ENCODE measurements at regions of chr2 and their contacts with region 1.

Region 1: DNA sequence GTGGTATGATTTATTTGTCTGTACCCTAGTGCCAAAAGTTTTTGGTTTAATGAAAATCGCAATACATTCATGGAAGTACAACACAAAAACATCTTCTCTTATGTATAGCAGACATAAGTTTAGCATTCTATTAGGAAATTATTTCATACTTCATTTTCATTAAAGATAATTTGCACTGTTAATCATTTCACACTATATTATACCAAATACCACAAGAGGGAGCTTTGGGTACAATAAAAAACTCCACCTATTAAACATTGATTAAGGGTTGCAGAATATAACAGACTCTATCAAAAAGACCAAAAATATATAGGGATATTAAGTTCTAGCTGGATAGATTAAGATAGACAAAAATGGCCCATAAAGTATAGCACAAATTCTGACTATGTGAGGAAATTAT is 79.0 kb downstream of the SLC66A3 start:
- DNase-seq: no peak
- ATAC-seq: peak; percentile 47; the same call in 2 of the 3 replicates
- H3K4me3 ChIP-seq: no peak overlapping the region
- H3K27ac ChIP-seq: no peak overlapping the region
- H3K4me1 ChIP-seq: no peaks in the 10 kb centered on the region
- H3K27me3 ChIP-seq: no peaks in the 10 kb centered on the region
- CTCF ChIP-seq: peak in 1 of 3 experiments; percentile 26; a peak in 2 of 6 replicates
- EP300 ChIP-seq: no peak
- POLR2A ChIP-seq: no peak
- RAD21 ChIP-seq: peak; percentile 56; the same call in 1 of the 2 replicates

Region 2: DNA sequence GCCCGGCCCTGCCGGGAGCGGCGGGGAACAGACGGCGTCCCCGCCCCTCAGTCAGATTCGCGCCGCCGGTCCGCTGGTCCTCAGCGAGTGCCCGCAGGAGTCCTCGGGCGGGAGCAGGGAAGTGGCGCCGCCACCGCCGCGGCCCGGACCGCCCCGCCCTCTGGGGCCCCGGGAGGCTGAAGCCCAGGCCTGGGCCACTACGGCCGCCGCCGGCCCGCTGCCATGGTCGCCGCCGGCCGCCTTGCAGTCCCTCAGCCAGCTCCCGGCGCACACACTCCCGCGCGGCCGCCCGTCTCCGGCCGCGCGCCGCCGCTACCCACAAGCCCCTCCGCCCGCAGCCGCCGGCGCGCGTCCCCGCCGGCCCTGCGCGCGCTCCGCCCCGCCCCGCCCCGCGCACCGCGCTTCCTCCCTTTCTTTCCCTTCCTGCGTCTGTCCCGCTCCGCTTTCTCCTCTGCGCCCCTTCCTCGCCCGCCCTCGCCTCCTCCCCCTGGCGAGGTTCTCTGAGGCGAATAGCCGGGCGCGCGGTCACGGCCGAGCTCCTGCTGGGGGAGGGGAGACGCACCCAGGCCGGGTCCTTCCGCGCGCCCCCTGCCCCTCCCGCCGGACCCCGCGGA is 110.1 kb after region 1 on chr2 and contains the start of gene ROCK2:
- CTCF ChIA-PET with region 1: interaction called, 13 read pairs
- POLR2A ChIA-PET with region 1: no interaction called
- RAD21 ChIA-PET with region 1: interaction called, 3 read pairs
- SMC1A ChIA-PET with region 1: interaction called, 4 read pairs
- in situ Hi-C with region 1: no loop called
- intact Hi-C with region 1: loop called (anchors 5 kb)
- DNase-seq: no peak
- ATAC-seq: peak; percentile 46
- H3K4me3 ChIP-seq: peak within 1 kb of the TSS; percentile 95
- H3K27ac ChIP-seq: peak within 1 kb of the TSS; percentile 68
- H3K4me1 ChIP-seq: no peaks in the 10 kb centered on the region
- H3K27me3 ChIP-seq: no peaks in the 10 kb centered on the region
- CTCF ChIP-seq: no peak
- EP300 ChIP-seq: no peak
- POLR2A ChIP-seq: peak; percentile 74; the same call in 1 of the 2 replicates
- RAD21 ChIP-seq: no peak
- polyA plus RNA-seq, gene ROCK2: 4.6 to 5.8 TPM

Region 3: GRCh38 chr2:11411768-11412448 is 177.6 kb after region 1 on chr2:
- CTCF ChIA-PET with region 1: interaction called, 41 read pairs
- POLR2A ChIA-PET with region 1: no interaction called
- RAD21 ChIA-PET with region 1: interaction called, 11 read pairs
- SMC1A ChIA-PET with region 1: interaction called, 17 read pairs
- in situ Hi-C with region 1: no loop called
- intact Hi-C with region 1: loop called (anchors 2 kb)
- DNase-seq: no peak
- ATAC-seq: peak; percentile 46
- H3K4me3 ChIP-seq: peak overlapping the region; percentile 49; the same call in 1 of the 2 replicates
- H3K27ac ChIP-seq: no peak overlapping the region
- H3K4me1 ChIP-seq: no peaks in the 10 kb centered on the region
- H3K27me3 ChIP-seq: peaks cover 0 to 1% of the 10 kb centered on the region in 2 experiments; a peak in 1 of 4 replicates
- CTCF ChIP-seq: peak; percentile 57 to 76 (median 63); a peak in 4 of 6 replicates
- EP300 ChIP-seq: no peak
- POLR2A ChIP-seq: no peak
- RAD21 ChIP-seq: peak; percentile 74

Region 4: DNA sequence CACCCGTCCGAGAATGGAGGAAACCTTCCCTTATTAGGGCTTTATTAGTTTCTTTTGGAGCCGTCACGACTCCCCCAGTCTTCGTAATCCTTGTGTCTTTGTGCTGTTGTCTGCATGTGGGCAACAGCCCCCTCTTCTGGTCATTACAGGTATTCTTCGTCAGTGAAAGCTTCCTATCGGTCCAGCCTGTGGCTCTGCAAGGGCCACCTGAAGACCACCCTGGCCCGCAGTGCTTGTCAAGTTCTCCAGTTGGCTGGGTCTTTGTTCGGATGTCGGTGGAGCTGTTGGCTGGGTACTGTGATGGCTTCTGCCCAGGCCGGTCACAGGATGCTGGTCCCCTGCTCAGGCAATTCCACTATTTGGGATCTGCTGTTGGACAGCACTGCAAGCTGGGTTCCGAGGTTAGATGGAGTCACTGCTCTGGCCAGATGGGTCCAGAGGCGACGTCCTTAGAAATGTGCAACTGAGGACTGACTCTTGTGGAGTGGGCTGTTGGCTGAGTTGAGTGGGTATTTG is 212.5 kb after region 1 on chr2:
- CTCF ChIA-PET with region 1: interaction called, 19 read pairs
- POLR2A ChIA-PET with region 1: no interaction called
- RAD21 ChIA-PET with region 1: interaction called, 4 read pairs
- SMC1A ChIA-PET with region 1: interaction called, 7 read pairs
- in situ Hi-C with region 1: loop called (anchors 10 kb)
- intact Hi-C with region 1: loop called (anchors 2 kb)
- DNase-seq: no peak
- ATAC-seq: peak; percentile 76
- H3K4me3 ChIP-seq: no peak overlapping the region
- H3K27ac ChIP-seq: no peak overlapping the region
- H3K4me1 ChIP-seq: no peaks in the 10 kb centered on the region
- H3K27me3 ChIP-seq: no peaks in the 10 kb centered on the region
- CTCF ChIP-seq: peak; percentile 63 to 74 (median 67)
- EP300 ChIP-seq: no peak
- POLR2A ChIP-seq: no peak
- RAD21 ChIP-seq: peak; percentile 81